ENCODE measurements at regions of chr4 and their contacts with region 1.

Region 1: DNA sequence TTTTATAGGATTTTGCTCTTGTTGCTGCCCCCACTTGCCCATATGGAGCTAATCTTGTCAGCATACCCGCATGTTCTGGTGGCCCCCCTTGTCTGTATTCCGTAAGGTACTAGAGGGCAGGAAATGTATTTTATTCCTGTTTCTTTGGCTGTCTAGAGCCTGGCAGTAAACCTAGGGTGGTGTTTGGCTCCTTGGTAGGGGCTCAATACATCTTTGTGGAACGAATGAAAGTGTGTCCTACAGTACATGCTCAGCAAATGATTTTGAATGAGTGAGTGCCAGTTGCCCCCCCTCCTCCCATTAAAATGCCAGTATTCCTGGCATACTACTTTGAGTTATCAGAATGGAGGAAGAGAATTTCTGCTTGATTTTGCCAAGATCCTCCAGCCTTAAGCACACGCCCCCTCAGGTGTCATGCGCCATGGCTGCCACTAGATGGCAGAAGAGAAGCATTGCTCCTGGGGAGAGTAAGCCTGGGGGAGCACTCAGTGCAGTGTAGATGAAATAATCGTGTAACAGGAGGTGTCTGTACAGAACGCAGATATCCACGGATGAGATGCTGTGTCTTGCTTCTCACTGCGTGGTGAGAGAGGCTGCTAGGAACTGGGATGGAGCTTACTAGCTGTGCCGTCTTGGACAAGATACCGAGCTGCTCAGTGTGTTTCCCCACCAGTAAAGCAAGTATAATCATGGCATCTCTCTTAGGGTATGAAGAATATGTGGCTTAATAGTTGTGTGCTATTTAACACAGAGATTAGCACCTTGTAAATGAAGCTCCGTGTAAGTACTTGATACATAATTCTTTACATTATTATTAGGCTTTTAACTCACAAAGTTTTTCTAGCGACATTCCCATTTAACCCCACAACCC is 17.2 kb upstream of the RNF212 start:
- DNase-seq: peak; percentile 60 to 88 (median 74)
- ATAC-seq: peak; percentile 100
- H3K4me3 ChIP-seq: no peak overlapping the region
- H3K4me3 Mint-ChIP-seq: no peak overlapping the region
- H3K27ac ChIP-seq: no peak overlapping the region
- H3K27ac Mint-ChIP-seq: no peak overlapping the region
- H3K4me1 ChIP-seq: no peaks in the 10 kb centered on the region
- H3K4me1 Mint-ChIP-seq: peaks cover 4% of the 10 kb centered on the region
- H3K27me3 ChIP-seq: no peaks in the 10 kb centered on the region
- H3K27me3 Mint-ChIP-seq: peaks cover 2% of the 10 kb centered on the region
- CTCF ChIP-seq: peak; percentile 99

Region 2: GRCh38 chr4:1011022-1011694 is 119.4 kb before region 1 on chr4 and contains the start of gene FGFRL1:
- CTCF ChIA-PET with region 1: no interaction called
- POLR2A ChIA-PET with region 1: no interaction called
- intact Hi-C with region 1: loop called in 1 of 2 experiments (anchors 1 kb)
- DNase-seq: peak; percentile 83 to 94 (median 93)
- ATAC-seq: peak; percentile 55
- H3K4me3 ChIP-seq: peak within 1 kb of the TSS; percentile 65 to 86
- H3K4me3 Mint-ChIP-seq: peak within 1 kb of the TSS; percentile 89
- H3K27ac ChIP-seq: peak within 1 kb of the TSS; percentile 65 to 71
- H3K27ac Mint-ChIP-seq: peak within 1 kb of the TSS; percentile 96
- H3K4me1 ChIP-seq: peaks cover 26% of the 10 kb centered on the region
- H3K4me1 Mint-ChIP-seq: peaks cover 12% of the 10 kb centered on the region
- H3K27me3 ChIP-seq: peaks cover 0 to 9% of the 10 kb centered on the region in 2 experiments
- H3K27me3 Mint-ChIP-seq: peaks cover 25% of the 10 kb centered on the region
- CTCF ChIP-seq: no peak
- total RNA-seq, gene FGFRL1: 26.3 to 30.2 TPM

Region 3: DNA sequence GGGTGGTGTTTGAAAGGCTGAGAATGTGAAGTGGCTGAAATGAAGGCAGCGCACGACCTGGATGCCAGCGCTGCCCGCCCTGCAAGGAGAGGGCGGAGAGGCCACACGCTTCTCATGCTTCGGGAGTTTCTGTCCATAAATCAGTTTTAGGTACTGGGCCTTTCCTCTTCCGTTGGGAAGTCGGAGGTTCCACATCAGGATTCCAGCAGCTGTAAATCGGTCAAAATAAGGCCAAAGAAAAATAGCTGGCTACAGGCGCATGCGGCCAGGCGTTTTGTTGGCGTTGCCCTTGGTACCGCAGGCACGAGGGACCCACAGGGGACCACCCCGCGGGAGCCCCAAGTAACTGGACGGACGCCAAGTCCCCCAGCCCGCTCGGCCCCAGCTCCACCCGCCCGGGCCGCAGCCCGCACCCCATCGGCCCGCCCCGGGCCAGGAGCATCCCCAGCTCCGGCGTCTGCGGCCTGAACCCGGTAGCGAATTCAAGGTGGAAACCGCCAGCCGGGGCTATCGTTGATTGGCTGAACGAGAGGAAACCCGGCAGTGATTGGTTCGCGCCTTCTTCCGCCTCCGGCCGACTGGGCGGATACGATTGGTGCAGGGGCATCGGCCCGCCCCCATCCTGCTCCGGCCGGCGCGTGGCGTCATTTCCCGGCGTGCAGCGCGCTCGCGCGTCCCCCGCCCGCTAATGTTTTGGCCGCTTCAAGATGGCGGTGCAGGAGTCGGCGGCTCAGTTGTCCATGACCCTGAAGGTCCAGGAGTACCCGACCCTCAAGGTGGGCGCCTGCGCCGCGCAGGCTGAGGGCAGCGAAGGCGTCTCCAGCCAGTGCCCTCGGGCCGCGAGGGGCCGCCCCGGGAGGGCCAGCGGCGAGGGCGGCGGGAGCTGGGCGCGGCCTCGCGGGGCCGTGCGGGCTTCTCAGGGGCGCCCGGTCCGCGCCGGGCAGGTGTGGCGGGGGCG is 158.9 kb after region 1 on chr4 and contains the start of gene MAEA:
- CTCF ChIA-PET with region 1: interaction called, 3 read pairs
- POLR2A ChIA-PET with region 1: no interaction called
- intact Hi-C with region 1: loop called (anchors 1 to 5 kb)
- DNase-seq: peak; percentile 94 to 98 (median 96)
- ATAC-seq: peak; percentile 97
- H3K4me3 ChIP-seq: peak within 1 kb of the TSS; percentile 57 to 92
- H3K4me3 Mint-ChIP-seq: peak within 1 kb of the TSS; percentile 92
- H3K27ac ChIP-seq: peak within 1 kb of the TSS; percentile 74 to 80
- H3K27ac Mint-ChIP-seq: peak within 1 kb of the TSS; percentile 91
- H3K4me1 ChIP-seq: peaks cover 38% of the 10 kb centered on the region
- H3K4me1 Mint-ChIP-seq: peaks cover 42% of the 10 kb centered on the region
- H3K27me3 ChIP-seq: no peaks in the 10 kb centered on the region
- H3K27me3 Mint-ChIP-seq: no peaks in the 10 kb centered on the region
- CTCF ChIP-seq: no peak
- total RNA-seq, gene MAEA: 74.6 to 77.6 TPM

Region 4: GRCh38 chr4:1512738-1513660 is 382.4 kb after region 1 on chr4:
- CTCF ChIA-PET with region 1: no interaction called
- POLR2A ChIA-PET with region 1: no interaction called
- intact Hi-C with region 1: loop called in 1 of 2 experiments (anchors 5 kb)
- DNase-seq: peak in 8 of 9 experiments; percentile 9 to 67 (median 40)
- ATAC-seq: peak; percentile 52
- H3K4me3 ChIP-seq: no peak overlapping the region
- H3K4me3 Mint-ChIP-seq: no peak overlapping the region
- H3K27ac ChIP-seq: no peak overlapping the region
- H3K27ac Mint-ChIP-seq: no peak overlapping the region
- H3K4me1 ChIP-seq: peaks cover 4% of the 10 kb centered on the region
- H3K4me1 Mint-ChIP-seq: no peaks in the 10 kb centered on the region
- H3K27me3 ChIP-seq: peaks cover 5 to 7% of the 10 kb centered on the region in 2 experiments
- H3K27me3 Mint-ChIP-seq: peaks cover 11% of the 10 kb centered on the region
- CTCF ChIP-seq: peak; percentile 65

Region 5: GRCh38 chr4:1628892-1629698 is 498.5 kb after region 1 on chr4:
- CTCF ChIA-PET with region 1: interaction called, 5 read pairs
- POLR2A ChIA-PET with region 1: no interaction called
- intact Hi-C with region 1: loop called (anchors 1 to 2 kb)
- DNase-seq: peak; percentile 51 to 81 (median 69)
- ATAC-seq: peak; percentile 93
- H3K4me3 ChIP-seq: no peak overlapping the region
- H3K4me3 Mint-ChIP-seq: no peak overlapping the region
- H3K27ac ChIP-seq: no peak overlapping the region
- H3K27ac Mint-ChIP-seq: no peak overlapping the region
- H3K4me1 ChIP-seq: no peaks in the 10 kb centered on the region
- H3K4me1 Mint-ChIP-seq: no peaks in the 10 kb centered on the region
- H3K27me3 ChIP-seq: no peaks in the 10 kb centered on the region
- H3K27me3 Mint-ChIP-seq: no peaks in the 10 kb centered on the region
- CTCF ChIP-seq: peak; percentile 95